ENCODE measurements at regions of chr12 and their contacts with region 1.

Region 1: GRCh38 chr12:113689047-113689610 is 217.5 kb upstream of the LHX5 start:
- DNase-seq: no peak
- H3K4me3 ChIP-seq: no peak overlapping the region
- H3K4me3 Mint-ChIP-seq: no peak overlapping the region
- H3K27ac ChIP-seq: no peak overlapping the region
- H3K27ac Mint-ChIP-seq: no peak overlapping the region
- H3K4me1 ChIP-seq: no peaks in the 10 kb centered on the region
- H3K4me1 Mint-ChIP-seq: no peaks in the 10 kb centered on the region
- H3K27me3 ChIP-seq: no peaks in the 10 kb centered on the region
- H3K27me3 Mint-ChIP-seq: peaks cover 6 to 7% of the 10 kb centered on the region in 2 donors

Region 2: DNA sequence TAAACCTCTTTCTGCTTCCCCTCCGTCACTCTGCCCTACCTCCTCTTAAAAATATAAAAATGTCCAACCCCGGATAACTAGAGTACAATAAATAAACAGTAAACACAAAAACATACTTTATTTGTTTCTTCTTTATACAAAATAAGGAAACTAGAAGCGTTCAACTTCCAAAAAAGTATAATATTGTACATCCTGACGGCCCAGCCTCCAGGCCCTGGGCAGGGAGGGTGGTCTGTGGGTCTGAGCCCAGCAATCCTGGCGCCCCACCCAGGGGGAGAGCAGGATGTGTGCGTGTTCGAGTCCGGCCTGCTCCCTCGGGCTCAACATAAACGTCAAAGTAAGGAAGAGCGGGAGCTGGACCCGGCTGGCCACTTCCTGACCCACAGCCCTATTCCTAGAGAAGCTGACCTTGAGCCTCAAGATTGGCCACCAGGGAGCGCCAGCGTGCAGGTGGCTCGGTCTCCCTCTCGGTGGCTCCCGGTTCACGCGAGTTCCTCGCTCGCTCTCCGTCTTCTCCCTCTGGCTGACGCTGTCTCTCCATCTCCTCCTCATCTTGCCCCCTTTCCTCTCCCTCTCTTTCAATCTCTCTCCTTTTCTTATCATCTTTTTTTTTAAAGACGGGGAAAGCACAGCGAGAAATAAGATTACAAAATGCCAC is 226.9 kb before region 1 on chr12:
- CTCF ChIA-PET with region 1: no interaction called
- POLR2A ChIA-PET with region 1: no interaction called
- intact Hi-C with region 1: no loop called
- DNase-seq: peak in 4 of 5 donors; percentile 53 to 59 (median 55)
- H3K4me3 ChIP-seq: no peak overlapping the region
- H3K4me3 Mint-ChIP-seq: peak overlapping the region; percentile 77 to 95 (median 85)
- H3K27ac ChIP-seq: no peak overlapping the region
- H3K27ac Mint-ChIP-seq: peak overlapping the region in 1 of 7 donors; percentile 58
- H3K4me1 ChIP-seq: peaks cover 32% of the 10 kb centered on the region
- H3K4me1 Mint-ChIP-seq: peaks cover 17 to 38% (median 25%) of the 10 kb centered on the region in 4 donors
- H3K27me3 ChIP-seq: peaks cover 24% of the 10 kb centered on the region
- H3K27me3 Mint-ChIP-seq: peaks cover 42 to 52% of the 10 kb centered on the region in 2 donors

Region 3: GRCh38 chr12:113700943-113701342 is 11.8 kb after region 1 on chr12:
- CTCF ChIA-PET with region 1: no interaction called
- POLR2A ChIA-PET with region 1: no interaction called
- intact Hi-C with region 1: no loop called
- DNase-seq: no peak
- H3K4me3 ChIP-seq: no peak overlapping the region
- H3K4me3 Mint-ChIP-seq: no peak overlapping the region
- H3K27ac ChIP-seq: no peak overlapping the region
- H3K27ac Mint-ChIP-seq: no peak overlapping the region
- H3K4me1 ChIP-seq: no peaks in the 10 kb centered on the region
- H3K4me1 Mint-ChIP-seq: no peaks in the 10 kb centered on the region
- H3K27me3 ChIP-seq: no peaks in the 10 kb centered on the region
- H3K27me3 Mint-ChIP-seq: peaks cover 8 to 13% of the 10 kb centered on the region in 2 donors

Region 4: GRCh38 chr12:113713156-113713555 is 24.0 kb after region 1 on chr12:
- CTCF ChIA-PET with region 1: no interaction called
- POLR2A ChIA-PET with region 1: no interaction called
- intact Hi-C with region 1: loop called (anchors 1 kb)
- DNase-seq: no peak
- H3K4me3 ChIP-seq: no peak overlapping the region
- H3K4me3 Mint-ChIP-seq: no peak overlapping the region
- H3K27ac ChIP-seq: no peak overlapping the region
- H3K27ac Mint-ChIP-seq: no peak overlapping the region
- H3K4me1 ChIP-seq: no peaks in the 10 kb centered on the region
- H3K4me1 Mint-ChIP-seq: no peaks in the 10 kb centered on the region
- H3K27me3 ChIP-seq: no peaks in the 10 kb centered on the region
- H3K27me3 Mint-ChIP-seq: peaks cover 5 to 13% of the 10 kb centered on the region in 2 donors

Measured in CD4-positive, alpha-beta memory T cell (primary cell).